ENCODE measurements at regions of chr16 and their contacts with region 1.

Region 1: DNA sequence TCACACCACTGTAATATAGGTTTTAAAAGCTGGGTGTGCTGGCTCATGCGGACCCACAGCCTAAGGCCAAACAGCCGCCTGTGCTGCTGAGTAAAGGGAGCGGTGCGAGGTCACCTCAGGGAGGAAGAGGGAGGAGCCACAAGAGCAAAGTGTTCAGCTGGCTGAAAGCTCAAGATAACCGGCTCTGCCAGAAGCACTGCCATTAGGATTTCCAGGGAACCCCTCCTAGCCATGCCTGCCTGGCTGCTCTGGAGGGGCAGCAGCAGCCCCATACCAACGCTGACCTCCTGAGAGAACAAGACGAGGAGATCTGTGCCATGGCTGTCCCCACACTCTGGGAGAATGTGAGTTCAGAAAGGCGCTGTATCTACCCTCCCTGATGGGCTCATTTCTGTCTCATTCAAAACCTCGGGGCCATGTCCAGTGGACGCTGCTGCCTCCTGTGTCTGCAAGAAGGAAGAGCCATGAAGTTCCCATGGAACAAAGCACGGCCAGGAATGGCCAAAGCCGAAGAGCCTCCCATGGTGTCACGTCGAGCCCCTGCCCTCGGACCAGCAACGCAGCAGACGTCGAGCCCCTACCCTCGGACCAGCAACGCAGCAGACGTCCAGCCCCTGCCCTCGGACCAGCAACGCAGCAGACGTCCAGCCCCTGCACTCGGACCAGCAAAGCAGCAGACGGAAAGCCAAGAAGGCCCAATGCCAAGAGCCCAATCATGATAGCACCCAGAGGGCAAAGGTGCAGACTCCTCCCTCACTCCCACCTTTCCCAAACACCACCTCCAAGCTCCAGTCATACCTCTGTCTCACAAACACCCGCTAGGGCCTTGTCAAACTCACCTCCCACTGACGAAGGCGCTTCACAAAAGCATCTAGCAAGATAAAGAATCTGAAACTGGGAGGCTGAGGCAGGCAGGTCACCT is 107.0 kb downstream of the ANKRD11 start:
- DNase-seq: no peak
- ATAC-seq: peak; percentile 28
- H3K4me3 Mint-ChIP-seq: peak overlapping the region; percentile 48
- H3K27ac Mint-ChIP-seq: no peak overlapping the region
- H3K4me1 Mint-ChIP-seq: peaks cover 89% of the 10 kb centered on the region
- H3K27me3 Mint-ChIP-seq: no peaks in the 10 kb centered on the region
- CTCF ChIP-seq: no peak

Region 2: GRCh38 chr16:89413811-89414585 is 30.7 kb after region 1 on chr16:
- CTCF ChIA-PET with region 1: no interaction called
- POLR2A ChIA-PET with region 1: interaction called, 10 read pairs
- intact Hi-C with region 1: no loop called
- DNase-seq: no peak
- ATAC-seq: no peak
- H3K4me3 Mint-ChIP-seq: no peak overlapping the region
- H3K27ac Mint-ChIP-seq: no peak overlapping the region
- H3K4me1 Mint-ChIP-seq: peaks cover 68% of the 10 kb centered on the region
- H3K27me3 Mint-ChIP-seq: no peaks in the 10 kb centered on the region
- CTCF ChIP-seq: no peak

Measured in activated B cell treated with CpG ODN at 0.5 μM for 24 hours (primary cell).